ENCODE measurements at regions of chr2 and their contacts with region 1.

Region 1: GRCh38 chr2:157336137-157337010 is 10.8 kb upstream of the ERMN start:
- DNase-seq: peak; percentile 68
- ATAC-seq: no peak
- H3K4me3 ChIP-seq: peak overlapping the region in 1 of 5 experiments; percentile 37
- H3K4me3 Mint-ChIP-seq: no peak overlapping the region
- H3K27ac ChIP-seq: no peak overlapping the region
- H3K27ac Mint-ChIP-seq: no peak overlapping the region
- H3K4me1 ChIP-seq: peaks cover 6% of the 10 kb centered on the region in 2 donors
- H3K4me1 Mint-ChIP-seq: peaks cover 7% of the 10 kb centered on the region
- H3K27me3 ChIP-seq: no peaks in the 10 kb centered on the region
- H3K27me3 Mint-ChIP-seq: no peaks in the 10 kb centered on the region
- CTCF ChIP-seq: peak; percentile 86

Region 2: GRCh38 chr2:157124731-157125130 is 211.6 kb before region 1 on chr2:
- CTCF ChIA-PET with region 1: no interaction called
- POLR2A ChIA-PET with region 1: no interaction called
- intact Hi-C with region 1: no loop called
- DNase-seq: no peak
- ATAC-seq: no peak
- H3K4me3 ChIP-seq: no peak overlapping the region
- H3K4me3 Mint-ChIP-seq: no peak overlapping the region
- H3K27ac ChIP-seq: no peak overlapping the region
- H3K27ac Mint-ChIP-seq: no peak overlapping the region
- H3K4me1 ChIP-seq: no peaks in the 10 kb centered on the region
- H3K4me1 Mint-ChIP-seq: no peaks in the 10 kb centered on the region
- H3K27me3 ChIP-seq: no peaks in the 10 kb centered on the region
- H3K27me3 Mint-ChIP-seq: peaks cover 4% of the 10 kb centered on the region
- CTCF ChIP-seq: no peak

Region 3: GRCh38 chr2:157279331-157279730 is 57.0 kb before region 1 on chr2:
- CTCF ChIA-PET with region 1: no interaction called
- POLR2A ChIA-PET with region 1: no interaction called
- intact Hi-C with region 1: no loop called
- DNase-seq: no peak
- ATAC-seq: no peak
- H3K4me3 ChIP-seq: no peak overlapping the region
- H3K4me3 Mint-ChIP-seq: no peak overlapping the region
- H3K27ac ChIP-seq: no peak overlapping the region
- H3K27ac Mint-ChIP-seq: no peak overlapping the region
- H3K4me1 ChIP-seq: no peaks in the 10 kb centered on the region
- H3K4me1 Mint-ChIP-seq: no peaks in the 10 kb centered on the region
- H3K27me3 ChIP-seq: peaks cover 0 to 3% (median 1%) of the 10 kb centered on the region in 4 experiments
- H3K27me3 Mint-ChIP-seq: peaks cover 51% of the 10 kb centered on the region
- CTCF ChIP-seq: no peak

Region 4: DNA sequence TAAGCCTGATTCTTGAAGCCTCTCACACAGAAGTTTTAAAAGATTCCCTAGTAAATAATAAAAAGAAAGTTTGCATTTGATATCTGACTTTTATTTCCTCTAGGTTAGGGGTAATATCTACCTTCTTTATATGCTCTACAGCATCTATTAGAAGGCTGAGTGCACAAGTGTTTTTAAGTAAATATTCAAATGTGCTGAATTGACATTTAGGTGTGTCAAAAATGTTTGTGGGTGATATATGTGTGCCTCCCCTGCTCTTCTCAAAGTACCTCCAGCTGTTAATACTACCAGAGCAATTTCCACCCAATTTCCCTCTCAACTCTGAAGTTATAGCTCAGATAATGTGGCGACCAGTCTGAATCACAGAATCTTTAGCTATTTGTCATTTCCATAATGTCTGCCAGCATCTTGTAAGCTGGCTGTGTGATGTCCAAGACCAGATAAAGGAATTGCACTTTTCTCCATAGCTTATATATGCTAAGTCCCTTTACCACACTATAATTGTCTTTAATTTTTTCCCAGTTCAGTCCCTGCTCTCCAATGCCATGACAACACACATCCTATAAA is 13.7 kb after region 1 on chr2:
- CTCF ChIA-PET with region 1: interaction called, 31 read pairs
- POLR2A ChIA-PET with region 1: no interaction called
- intact Hi-C with region 1: no loop called
- DNase-seq: no peak
- ATAC-seq: no peak
- H3K4me3 ChIP-seq: no peak overlapping the region
- H3K4me3 Mint-ChIP-seq: no peak overlapping the region
- H3K27ac ChIP-seq: no peak overlapping the region
- H3K27ac Mint-ChIP-seq: no peak overlapping the region
- H3K4me1 ChIP-seq: no peaks in the 10 kb centered on the region
- H3K4me1 Mint-ChIP-seq: no peaks in the 10 kb centered on the region
- H3K27me3 ChIP-seq: no peaks in the 10 kb centered on the region
- H3K27me3 Mint-ChIP-seq: no peaks in the 10 kb centered on the region
- CTCF ChIP-seq: no peak

Region 5: GRCh38 chr2:157404363-157404762 is 68.0 kb after region 1 on chr2:
- CTCF ChIA-PET with region 1: interaction called, 22 read pairs
- POLR2A ChIA-PET with region 1: no interaction called
- intact Hi-C with region 1: no loop called
- DNase-seq: peak; percentile 91
- ATAC-seq: peak; percentile 91
- H3K4me3 ChIP-seq: peak overlapping the region in 1 of 5 experiments; percentile 46
- H3K4me3 Mint-ChIP-seq: peak overlapping the region; percentile 68
- H3K27ac ChIP-seq: peak overlapping the region; percentile 67 to 86
- H3K27ac Mint-ChIP-seq: peak overlapping the region; percentile 92
- H3K4me1 ChIP-seq: peaks cover 29% of the 10 kb centered on the region in 2 donors
- H3K4me1 Mint-ChIP-seq: peaks cover 51% of the 10 kb centered on the region
- H3K27me3 ChIP-seq: no peaks in the 10 kb centered on the region
- H3K27me3 Mint-ChIP-seq: no peaks in the 10 kb centered on the region
- CTCF ChIP-seq: no peak

Region 6: GRCh38 chr2:157420771-157421323 is 84.5 kb after region 1 on chr2:
- CTCF ChIA-PET with region 1: interaction called, 14 read pairs
- POLR2A ChIA-PET with region 1: no interaction called
- intact Hi-C with region 1: no loop called
- DNase-seq: peak; percentile 77
- ATAC-seq: peak; percentile 71
- H3K4me3 ChIP-seq: no peak overlapping the region
- H3K4me3 Mint-ChIP-seq: peak overlapping the region; percentile 78
- H3K27ac ChIP-seq: peak overlapping the region; percentile 58 to 88
- H3K27ac Mint-ChIP-seq: peak overlapping the region; percentile 94
- H3K4me1 ChIP-seq: peaks cover 49 to 52% of the 10 kb centered on the region in 2 donors
- H3K4me1 Mint-ChIP-seq: peaks cover 57% of the 10 kb centered on the region
- H3K27me3 ChIP-seq: no peaks in the 10 kb centered on the region
- H3K27me3 Mint-ChIP-seq: no peaks in the 10 kb centered on the region
- CTCF ChIP-seq: no peak

Region 7: GRCh38 chr2:157443795-157444640 is 107.6 kb after region 1 on chr2 and contains the start of gene CYTIP:
- CTCF ChIA-PET with region 1: interaction called, 11 read pairs
- POLR2A ChIA-PET with region 1: interaction called, 8 read pairs
- intact Hi-C with region 1: no loop called
- DNase-seq: peak; percentile 88
- ATAC-seq: peak; percentile 58
- H3K4me3 ChIP-seq: peak within 1 kb of the TSS; percentile 82 to 98 (median 92)
- H3K4me3 Mint-ChIP-seq: peak within 1 kb of the TSS; percentile 94
- H3K27ac ChIP-seq: peak within 1 kb of the TSS; percentile 93 to 96
- H3K27ac Mint-ChIP-seq: peak within 1 kb of the TSS; percentile 95
- H3K4me1 ChIP-seq: peaks cover 40 to 43% of the 10 kb centered on the region in 2 donors
- H3K4me1 Mint-ChIP-seq: peaks cover 39% of the 10 kb centered on the region
- H3K27me3 ChIP-seq: no peaks in the 10 kb centered on the region
- H3K27me3 Mint-ChIP-seq: no peaks in the 10 kb centered on the region
- CTCF ChIP-seq: no peak
- total RNA-seq, gene CYTIP: 327 and 358 TPM in 2 replicates

Region 8: DNA sequence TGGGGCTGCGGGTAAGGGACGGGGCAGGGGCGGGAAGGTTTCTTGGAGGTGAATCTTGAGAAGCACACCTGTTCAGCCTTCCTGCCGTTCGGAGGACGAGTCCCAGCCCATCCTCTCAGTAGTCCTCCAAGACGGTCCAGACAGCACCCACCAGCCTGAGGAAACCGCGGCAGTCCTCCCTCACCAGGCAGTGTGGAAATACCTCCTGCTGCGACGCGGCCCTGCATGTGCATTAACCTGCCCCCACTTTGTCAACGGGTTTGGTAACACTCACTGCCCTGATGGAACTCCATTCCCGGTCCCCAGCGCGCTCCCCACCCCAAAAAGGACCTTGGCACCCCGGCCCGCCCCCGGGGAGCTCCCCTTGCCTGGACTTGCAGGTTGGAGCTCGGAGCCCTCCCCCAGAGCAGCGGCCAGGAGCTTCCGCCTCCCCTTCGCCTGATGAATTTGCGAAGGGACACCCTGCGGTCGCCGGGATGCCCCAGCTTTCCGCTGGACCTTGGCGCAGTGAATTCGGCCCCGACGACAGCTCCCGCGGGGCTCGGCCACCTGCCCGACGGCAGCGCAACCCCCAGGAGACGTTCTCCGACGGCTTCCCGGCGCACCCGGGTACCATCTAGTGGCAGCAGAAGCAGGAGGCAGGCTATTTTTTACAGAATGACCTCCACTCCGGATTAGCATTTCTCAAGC is 260.8 kb after region 1 on chr2:
- CTCF ChIA-PET with region 1: interaction called, 21 read pairs
- POLR2A ChIA-PET with region 1: no interaction called
- intact Hi-C with region 1: no loop called
- DNase-seq: peak; percentile 67
- ATAC-seq: peak; percentile 84
- H3K4me3 ChIP-seq: peak overlapping the region in 3 of 5 experiments; percentile 6 to 42 (median 27)
- H3K4me3 Mint-ChIP-seq: peak overlapping the region; percentile 66
- H3K27ac ChIP-seq: no peak overlapping the region
- H3K27ac Mint-ChIP-seq: no peak overlapping the region
- H3K4me1 ChIP-seq: peaks cover 0 to 4% of the 10 kb centered on the region in 2 donors
- H3K4me1 Mint-ChIP-seq: peaks cover 7% of the 10 kb centered on the region
- H3K27me3 ChIP-seq: peaks cover 0 to 8% (median 2%) of the 10 kb centered on the region in 4 experiments
- H3K27me3 Mint-ChIP-seq: peaks cover 16% of the 10 kb centered on the region
- CTCF ChIP-seq: peak; percentile 75

Measured in B cell (primary cell).